CD4-positive, alpha-beta T cell (primary cell): ENCODE measurements at regions of chr19 and their contacts with region 1.

Region 1: DNA sequence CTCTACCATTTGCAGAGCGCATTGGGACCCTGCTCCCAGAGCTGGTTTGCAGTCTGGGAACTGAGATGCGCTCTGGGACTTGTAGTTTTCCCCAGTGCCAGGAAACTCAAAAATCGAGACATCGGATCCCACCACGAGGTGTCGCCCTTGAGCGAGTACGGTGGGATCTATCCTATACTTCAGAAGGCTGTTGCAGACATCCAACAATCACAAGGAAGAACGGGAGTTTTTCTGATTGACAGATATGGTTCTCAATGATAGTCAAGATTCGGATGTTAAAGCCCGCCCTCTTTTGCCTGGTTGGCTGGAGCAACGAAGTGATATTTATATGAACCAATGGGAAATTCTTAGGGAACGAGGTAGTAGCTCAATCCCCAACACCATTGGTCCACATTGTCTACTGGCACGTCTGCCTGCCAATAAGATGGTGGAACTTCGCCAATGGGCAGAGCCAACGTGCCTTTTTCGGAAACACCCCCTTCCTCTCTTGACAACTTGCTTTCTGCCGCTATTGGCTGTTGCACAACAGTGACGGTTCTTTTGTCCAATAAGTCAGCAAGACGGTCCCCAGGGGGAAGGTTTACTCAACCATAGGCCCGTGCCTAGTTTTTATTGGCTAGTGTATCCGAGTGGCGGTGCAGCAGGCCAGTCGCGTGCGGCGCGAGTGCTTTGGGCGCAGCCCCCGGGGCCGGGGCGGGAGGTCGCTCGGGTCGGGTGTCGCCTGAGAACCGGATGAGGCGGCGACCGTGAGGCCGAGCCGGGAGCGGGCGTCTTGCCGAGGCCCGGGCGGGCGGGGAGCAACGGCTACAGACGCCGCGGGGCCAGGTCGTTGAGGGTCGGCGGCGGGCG is at the start of gene DNM2:
- DNase-seq: peak; percentile 92 to 100 (median 96)
- ATAC-seq: peak; percentile 82
- H3K4me3 ChIP-seq: peak within 1 kb of the TSS; percentile 80
- H3K4me3 Mint-ChIP-seq: peak within 1 kb of the TSS; percentile 96
- H3K27ac ChIP-seq: peak within 1 kb of the TSS; percentile 55 to 87
- H3K27ac Mint-ChIP-seq: peak within 1 kb of the TSS; percentile 89
- H3K4me1 ChIP-seq: peaks cover 48% of the 10 kb centered on the region
- H3K4me1 Mint-ChIP-seq: peaks cover 49% of the 10 kb centered on the region
- H3K27me3 ChIP-seq: no peaks in the 10 kb centered on the region
- H3K27me3 Mint-ChIP-seq: no peaks in the 10 kb centered on the region
- CTCF ChIP-seq: peak; percentile 77
- total RNA-seq, gene DNM2: 279 to 286 TPM

Region 2: DNA sequence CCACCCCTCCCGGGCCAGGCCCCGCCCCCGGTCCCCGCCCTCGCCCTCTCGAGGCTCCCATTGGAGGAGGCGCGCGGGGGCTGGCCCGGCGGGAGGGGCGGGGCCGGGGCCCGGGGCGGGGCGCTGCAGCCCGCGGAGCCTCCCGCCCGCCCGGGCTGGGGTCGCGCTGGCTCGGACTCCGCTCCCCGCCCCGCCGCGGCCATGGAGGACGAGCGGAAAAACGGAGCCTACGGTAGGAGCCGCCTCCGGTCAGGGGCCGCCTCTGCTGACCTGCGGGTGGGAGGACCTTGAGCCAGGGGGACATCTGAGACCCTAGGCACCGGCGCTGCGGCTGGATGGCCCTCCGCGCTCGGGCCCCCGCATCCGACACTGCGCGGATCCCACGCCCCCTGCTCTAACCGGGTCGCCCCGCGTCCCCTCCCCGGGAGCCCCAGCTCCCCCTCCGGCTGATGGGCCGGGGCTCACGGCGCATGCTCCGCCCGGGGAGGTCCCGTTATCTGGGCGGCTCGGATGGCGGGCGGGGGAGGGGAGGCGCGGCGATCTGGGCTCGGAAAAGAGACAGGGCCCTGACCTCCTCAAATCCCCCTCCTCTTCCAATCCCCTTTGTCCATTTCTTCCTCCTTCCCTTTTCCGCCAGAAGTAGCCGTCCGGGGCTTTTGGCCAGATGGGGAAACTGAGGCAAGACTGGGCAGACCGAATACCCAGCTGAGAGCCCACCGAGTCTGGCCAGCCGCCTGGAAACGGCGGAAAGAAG is 115.1 kb before region 1 on chr19:
- CTCF ChIA-PET with region 1: no interaction called
- POLR2A ChIA-PET with region 1: interaction called, 15 read pairs
- intact Hi-C with region 1: no loop called
- DNase-seq: peak; percentile 79 to 96 (median 88)
- ATAC-seq: peak; percentile 79
- H3K4me3 ChIP-seq: peak overlapping the region; percentile 96
- H3K4me3 Mint-ChIP-seq: peak overlapping the region; percentile 100
- H3K27ac ChIP-seq: peak overlapping the region; percentile 99 to 100
- H3K27ac Mint-ChIP-seq: peak overlapping the region; percentile 95
- H3K4me1 ChIP-seq: peaks cover 44% of the 10 kb centered on the region
- H3K4me1 Mint-ChIP-seq: peaks cover 35% of the 10 kb centered on the region
- H3K27me3 ChIP-seq: no peaks in the 10 kb centered on the region
- H3K27me3 Mint-ChIP-seq: no peaks in the 10 kb centered on the region
- CTCF ChIP-seq: no peak

Region 3: DNA sequence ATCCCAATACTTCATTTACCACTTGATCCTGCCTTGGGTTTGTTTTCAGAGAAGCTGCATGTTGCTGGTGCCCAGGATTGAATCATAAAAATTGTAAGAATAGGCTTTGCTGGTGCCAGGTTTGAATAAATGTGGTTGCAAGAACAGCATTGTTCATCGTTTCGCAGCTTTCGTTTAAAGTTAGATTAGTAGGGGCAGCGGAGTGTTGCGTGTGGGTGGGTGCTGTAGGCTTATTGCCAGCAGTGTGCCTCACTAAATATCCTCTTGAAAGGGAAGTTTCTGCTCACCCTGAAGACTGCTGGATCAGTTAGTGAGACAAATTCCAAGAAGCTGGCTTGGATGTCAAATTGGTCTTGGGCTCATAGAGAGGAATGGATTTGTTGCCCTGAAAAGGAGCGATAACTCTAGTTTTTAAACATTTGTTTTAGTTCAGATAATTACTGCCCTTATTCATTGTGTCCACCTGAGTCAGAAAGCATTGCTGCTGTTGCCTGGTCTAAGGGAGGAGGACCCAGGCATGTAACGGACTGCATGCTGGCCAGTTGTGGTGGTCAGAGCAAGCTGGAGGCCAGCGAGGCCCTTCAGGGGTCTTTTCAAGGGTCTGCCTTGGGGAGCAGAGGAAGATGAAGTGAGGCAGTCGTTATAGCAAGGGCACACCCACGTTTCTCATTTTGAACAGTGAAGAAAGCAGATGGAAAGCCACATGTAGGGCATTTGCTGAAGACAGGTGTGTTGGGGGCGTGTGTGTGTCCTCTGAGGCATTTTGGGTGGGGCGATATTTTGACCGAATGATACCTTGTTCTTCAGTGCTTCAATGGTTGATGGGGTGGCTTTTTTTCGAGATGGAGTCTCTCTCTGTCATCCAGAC is 55.0 kb before region 1 on chr19:
- CTCF ChIA-PET with region 1: no interaction called
- POLR2A ChIA-PET with region 1: no interaction called
- intact Hi-C with region 1: no loop called
- DNase-seq: no peak
- ATAC-seq: no peak
- H3K4me3 ChIP-seq: no peak overlapping the region
- H3K4me3 Mint-ChIP-seq: peak overlapping the region; percentile 43
- H3K27ac ChIP-seq: no peak overlapping the region
- H3K27ac Mint-ChIP-seq: peak overlapping the region; percentile 74
- H3K4me1 ChIP-seq: peaks cover 82% of the 10 kb centered on the region
- H3K4me1 Mint-ChIP-seq: peaks cover 52% of the 10 kb centered on the region
- H3K27me3 ChIP-seq: no peaks in the 10 kb centered on the region
- H3K27me3 Mint-ChIP-seq: no peaks in the 10 kb centered on the region
- CTCF ChIP-seq: no peak

Region 4: DNA sequence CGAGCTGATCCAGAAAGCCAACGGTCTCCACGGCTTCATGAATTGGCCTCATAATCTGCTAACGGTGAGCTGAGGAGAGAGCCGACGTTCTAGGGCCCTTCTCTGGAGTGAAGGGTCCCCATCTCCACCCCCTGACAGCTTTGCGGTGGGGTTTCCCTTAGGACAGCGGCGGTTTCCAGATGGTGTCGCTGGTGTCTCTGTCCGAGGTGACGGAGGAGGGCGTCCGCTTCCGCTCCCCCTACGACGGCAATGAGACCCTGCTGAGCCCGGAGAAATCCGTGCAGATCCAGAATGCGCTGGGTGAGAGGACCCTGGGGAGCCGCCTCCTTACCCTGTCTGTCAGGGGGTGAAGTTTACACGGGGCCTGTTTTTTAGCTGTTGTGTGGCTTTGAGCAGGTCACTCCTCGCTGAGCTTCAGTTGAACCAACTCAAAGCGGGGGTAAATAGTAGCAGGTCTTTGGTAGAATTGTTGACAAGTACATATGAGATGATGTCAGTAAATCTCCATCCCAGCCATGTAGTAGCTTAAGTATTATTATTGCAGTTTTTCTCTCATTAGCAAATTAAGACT is 15.5 kb before region 1 on chr19:
- CTCF ChIA-PET with region 1: interaction called, 15 read pairs
- POLR2A ChIA-PET with region 1: interaction called, 34 read pairs
- intact Hi-C with region 1: loop called in 1 of 2 experiments (anchors 2 kb)
- DNase-seq: peak in 2 of 14 experiments; percentile 27 to 44
- ATAC-seq: peak; percentile 13
- H3K4me3 ChIP-seq: peak overlapping the region; percentile 99
- H3K4me3 Mint-ChIP-seq: peak overlapping the region; percentile 90
- H3K27ac ChIP-seq: no peak overlapping the region
- H3K27ac Mint-ChIP-seq: peak overlapping the region; percentile 27
- H3K4me1 ChIP-seq: peaks cover 19% of the 10 kb centered on the region
- H3K4me1 Mint-ChIP-seq: peaks cover 13% of the 10 kb centered on the region
- H3K27me3 ChIP-seq: peaks cover 0 to 4% of the 10 kb centered on the region in 2 experiments
- H3K27me3 Mint-ChIP-seq: peaks cover 7% of the 10 kb centered on the region
- CTCF ChIP-seq: no peak

Region 5: GRCh38 chr19:10748924-10749434 is 31.4 kb after region 1 on chr19:
- CTCF ChIA-PET with region 1: interaction called, 7 read pairs
- POLR2A ChIA-PET with region 1: interaction called, 17 read pairs
- intact Hi-C with region 1: no loop called
- DNase-seq: peak in 2 of 14 experiments; percentile 15 to 35
- ATAC-seq: no peak
- H3K4me3 ChIP-seq: no peak overlapping the region
- H3K4me3 Mint-ChIP-seq: no peak overlapping the region
- H3K27ac ChIP-seq: peak overlapping the region in 1 of 2 donors; percentile 30
- H3K27ac Mint-ChIP-seq: peak overlapping the region; percentile 96
- H3K4me1 ChIP-seq: peaks cover 84% of the 10 kb centered on the region
- H3K4me1 Mint-ChIP-seq: peaks cover 83% of the 10 kb centered on the region
- H3K27me3 ChIP-seq: no peaks in the 10 kb centered on the region
- H3K27me3 Mint-ChIP-seq: no peaks in the 10 kb centered on the region
- CTCF ChIP-seq: no peak

Region 6: DNA sequence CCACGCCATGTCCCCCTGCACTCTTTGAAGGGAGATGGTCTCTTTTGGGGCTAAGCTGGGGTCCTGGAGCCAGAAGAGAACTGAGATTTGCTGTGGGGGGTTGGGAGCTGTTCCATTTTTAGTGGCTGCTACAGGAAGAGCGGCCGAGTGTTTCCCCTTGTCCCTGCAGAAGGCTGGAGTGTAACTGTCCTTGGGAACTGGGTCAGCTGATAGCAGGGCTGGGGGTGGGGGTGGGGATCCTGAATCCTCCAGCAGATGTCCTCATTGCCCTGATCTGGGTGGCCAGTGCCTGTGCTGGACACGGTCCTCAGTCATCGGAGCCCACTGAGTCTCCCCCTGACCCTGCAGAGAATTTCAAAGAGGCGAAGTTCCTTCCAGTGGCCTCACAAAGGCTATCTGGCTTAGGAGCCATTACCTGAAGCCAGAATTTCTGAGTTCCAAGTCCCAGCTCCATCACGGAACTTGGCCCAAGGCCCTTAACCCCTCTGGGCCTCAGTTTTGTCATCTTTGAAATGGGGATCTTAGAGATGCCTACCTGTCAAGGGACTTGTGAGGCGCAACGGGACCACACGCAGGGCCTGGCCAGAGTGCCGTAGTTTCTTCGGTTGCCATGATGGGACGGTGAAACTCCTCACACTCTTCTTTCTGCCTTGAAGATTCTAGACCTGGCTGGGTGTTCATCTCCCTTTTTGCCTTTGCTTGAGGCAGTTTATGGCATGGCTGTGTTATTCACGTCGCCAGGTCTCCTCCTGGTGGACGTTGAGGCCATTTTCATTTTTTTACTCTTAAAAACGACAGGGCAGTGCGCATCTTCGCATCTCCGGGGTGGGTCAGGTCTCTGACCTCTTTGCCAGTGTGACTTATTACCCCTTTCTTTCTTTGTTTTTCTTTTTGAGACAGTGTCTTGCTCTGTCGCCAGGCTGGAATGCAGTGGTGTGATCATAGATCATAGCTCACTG is 52.2 kb after region 1 on chr19:
- CTCF ChIA-PET with region 1: interaction called, 19 read pairs
- POLR2A ChIA-PET with region 1: interaction called, 30 read pairs
- intact Hi-C with region 1: loop called (anchors 1 kb)
- DNase-seq: peak in 8 of 14 experiments; percentile 16 to 68 (median 34)
- ATAC-seq: peak; percentile 72
- H3K4me3 ChIP-seq: no peak overlapping the region
- H3K4me3 Mint-ChIP-seq: no peak overlapping the region
- H3K27ac ChIP-seq: peak overlapping the region in 1 of 2 donors; percentile 2
- H3K27ac Mint-ChIP-seq: peak overlapping the region; percentile 75
- H3K4me1 ChIP-seq: peaks cover 41% of the 10 kb centered on the region
- H3K4me1 Mint-ChIP-seq: peaks cover 40% of the 10 kb centered on the region
- H3K27me3 ChIP-seq: no peaks in the 10 kb centered on the region
- H3K27me3 Mint-ChIP-seq: no peaks in the 10 kb centered on the region
- CTCF ChIP-seq: peak; percentile 41

Region 7: DNA sequence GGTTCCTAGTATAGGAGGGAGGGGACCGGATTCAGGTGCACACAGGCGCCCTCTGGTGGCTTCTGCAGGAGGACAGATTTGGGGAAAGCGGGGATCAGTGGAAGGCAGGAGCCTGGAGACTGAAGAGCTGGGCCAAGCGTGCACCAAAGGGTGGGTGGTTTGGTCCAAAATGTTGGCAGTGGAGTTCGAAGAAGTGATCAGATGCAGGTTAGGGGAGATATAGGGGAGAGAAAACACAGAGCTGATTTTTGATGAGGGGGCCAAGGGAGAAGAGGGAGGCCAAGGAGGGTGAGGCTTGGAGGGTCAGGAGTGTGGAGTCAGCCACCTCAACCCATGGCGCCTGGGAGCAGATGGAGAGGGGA is 146.9 kb after region 1 on chr19:
- CTCF ChIA-PET with region 1: interaction called, 40 read pairs
- POLR2A ChIA-PET with region 1: interaction called, 29 read pairs
- intact Hi-C with region 1: loop called (anchors 1 kb)
- DNase-seq: peak; percentile 70 to 91 (median 77)
- ATAC-seq: peak; percentile 97
- H3K4me3 ChIP-seq: no peak overlapping the region
- H3K4me3 Mint-ChIP-seq: no peak overlapping the region
- H3K27ac ChIP-seq: no peak overlapping the region
- H3K27ac Mint-ChIP-seq: peak overlapping the region; percentile 0
- H3K4me1 ChIP-seq: peaks cover 11% of the 10 kb centered on the region
- H3K4me1 Mint-ChIP-seq: peaks cover 7% of the 10 kb centered on the region
- H3K27me3 ChIP-seq: no peaks in the 10 kb centered on the region
- H3K27me3 Mint-ChIP-seq: no peaks in the 10 kb centered on the region
- CTCF ChIP-seq: peak; percentile 96